GM10248 (cell line): ENCODE measurements at regions of chr16 and their contacts with region 1.

Region 1: GRCh38 chr16:106623-107324 is 28.7 kb downstream of the MPG start:
- DNase-seq: peak; percentile 83
- CTCF ChIP-seq: peak; percentile 81

Region 2: DNA sequence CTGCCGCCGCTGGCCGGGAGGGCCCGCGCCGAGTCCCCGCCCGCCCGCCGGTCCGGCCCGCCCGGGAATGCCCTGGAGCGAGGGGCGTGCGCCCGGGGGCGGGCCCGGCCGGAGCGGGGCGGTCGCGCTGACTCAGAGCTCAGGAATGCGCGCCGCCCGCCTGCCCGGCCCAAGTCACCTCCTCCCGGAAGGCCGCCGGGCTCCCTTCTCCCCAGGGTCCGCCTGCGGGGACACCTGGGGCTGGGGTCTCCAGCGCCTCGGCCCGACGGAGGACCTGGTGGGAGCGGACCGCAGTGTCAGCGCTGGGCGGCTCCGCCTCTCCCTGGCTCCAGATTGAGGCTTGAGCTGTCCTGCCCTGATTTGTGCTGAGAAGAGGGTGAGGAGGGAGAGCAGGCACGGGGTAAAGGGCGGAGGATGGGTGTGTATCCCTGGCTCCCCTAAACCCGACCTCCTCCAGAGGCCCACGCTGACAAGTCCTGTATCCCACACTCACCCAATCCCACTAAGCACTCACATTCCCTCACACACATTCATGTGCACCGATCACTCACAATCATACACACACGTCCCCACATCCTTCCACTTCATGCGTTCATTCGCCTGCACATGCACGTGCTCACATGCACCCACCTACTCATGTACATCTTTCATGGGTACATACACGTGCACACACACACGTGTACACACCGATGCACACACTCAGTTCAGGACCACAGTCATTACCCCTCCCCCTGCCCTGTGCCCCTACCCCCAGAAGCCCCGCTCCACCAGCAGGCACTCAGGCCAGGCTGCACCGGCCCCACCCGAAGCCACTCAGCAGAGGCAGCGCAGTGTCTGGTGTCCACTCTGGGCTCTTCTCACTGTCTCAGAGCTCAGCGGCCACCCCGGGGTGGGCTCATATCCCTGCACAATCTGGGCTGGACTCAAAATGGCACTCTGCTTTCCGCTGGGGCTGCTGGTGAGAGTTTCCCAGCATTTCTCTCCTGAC is 33.9 kb before region 1 on chr16 and contains the start of gene RHBDF1:
- CTCF ChIA-PET with region 1: interaction called, 13 read pairs
- POLR2A ChIA-PET with region 1: no interaction called
- DNase-seq: peak; percentile 59
- CTCF ChIP-seq: no peak

Region 3: DNA sequence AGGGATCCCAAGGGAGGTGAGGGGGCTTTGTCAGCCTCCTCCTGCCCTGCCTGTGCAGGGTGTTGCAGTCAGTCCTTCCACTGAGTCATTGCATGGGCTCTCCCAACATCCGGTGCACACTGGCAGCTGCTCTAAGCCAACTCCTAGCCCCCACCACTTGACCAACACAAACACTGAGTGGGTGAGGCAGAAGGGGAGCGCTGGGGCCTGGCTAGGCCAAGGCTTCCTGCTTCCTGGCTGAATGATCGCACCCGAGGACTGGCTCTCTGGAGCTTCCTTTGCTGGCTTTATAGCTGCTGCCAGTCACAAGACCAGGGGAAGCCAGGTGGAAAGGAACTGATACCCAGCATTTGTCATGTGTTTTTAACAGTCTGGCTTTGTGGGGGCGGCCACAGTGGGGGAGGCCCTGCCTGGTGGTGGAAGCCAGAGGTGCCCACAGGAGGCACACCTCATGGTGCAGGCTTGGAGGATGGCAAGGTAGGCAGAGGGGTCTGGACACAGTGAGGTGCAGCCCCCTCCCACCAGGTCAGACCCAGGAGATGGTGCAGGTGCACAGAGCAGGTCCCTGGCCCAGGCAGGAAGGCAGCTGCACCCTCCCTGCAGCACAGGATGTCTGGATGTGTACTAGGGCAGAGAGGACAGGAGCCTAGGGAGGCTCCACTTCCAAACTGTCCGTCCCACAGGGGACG is 21.9 kb before region 1 on chr16:
- CTCF ChIA-PET with region 1: interaction called, 10 read pairs
- POLR2A ChIA-PET with region 1: no interaction called
- DNase-seq: peak; percentile 79
- CTCF ChIP-seq: no peak

Region 4: GRCh38 chr16:117379-118365 is 10.9 kb after region 1 on chr16:
- CTCF ChIA-PET with region 1: interaction called, 54 read pairs
- POLR2A ChIA-PET with region 1: no interaction called
- DNase-seq: peak; percentile 67
- CTCF ChIP-seq: peak; percentile 58

Region 5: DNA sequence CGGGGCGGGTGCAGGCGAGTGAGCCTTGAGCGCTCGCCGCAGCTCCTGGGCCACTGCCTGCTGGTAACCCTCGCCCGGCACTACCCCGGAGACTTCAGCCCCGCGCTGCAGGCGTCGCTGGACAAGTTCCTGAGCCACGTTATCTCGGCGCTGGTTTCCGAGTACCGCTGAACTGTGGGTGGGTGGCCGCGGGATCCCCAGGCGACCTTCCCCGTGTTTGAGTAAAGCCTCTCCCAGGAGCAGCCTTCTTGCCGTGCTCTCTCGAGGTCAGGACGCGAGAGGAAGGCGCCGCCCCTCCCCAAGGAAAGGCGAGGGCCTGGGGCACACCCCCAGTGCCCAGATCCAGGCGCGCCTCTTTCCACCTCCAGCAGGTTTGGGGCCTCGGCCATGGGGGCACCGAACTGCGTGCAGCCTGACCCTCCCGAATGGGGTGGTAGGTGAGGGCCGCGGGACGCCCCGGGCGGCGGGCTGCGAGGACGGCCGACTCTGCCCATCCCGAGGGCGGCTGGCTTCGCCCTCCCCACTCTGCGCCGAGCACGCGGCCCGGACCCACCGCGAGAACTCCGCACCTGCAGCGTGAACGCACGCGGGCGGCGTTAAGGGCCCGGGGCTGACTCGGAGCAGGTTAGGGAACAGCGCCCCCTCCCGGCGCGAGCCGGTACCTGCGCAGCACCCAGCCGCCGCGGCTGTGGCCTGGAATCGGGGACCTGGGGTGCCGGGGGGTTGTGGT is 74.3 kb after region 1 on chr16:
- CTCF ChIA-PET with region 1: interaction called, 34 read pairs
- POLR2A ChIA-PET with region 1: no interaction called
- DNase-seq: peak; percentile 93
- CTCF ChIP-seq: peak; percentile 98

Region 6: GRCh38 chr16:351804-352520 is 245.2 kb after region 1 on chr16:
- CTCF ChIA-PET with region 1: interaction called, 10 read pairs
- POLR2A ChIA-PET with region 1: no interaction called
- DNase-seq: no peak
- CTCF ChIP-seq: no peak

Region 7: DNA sequence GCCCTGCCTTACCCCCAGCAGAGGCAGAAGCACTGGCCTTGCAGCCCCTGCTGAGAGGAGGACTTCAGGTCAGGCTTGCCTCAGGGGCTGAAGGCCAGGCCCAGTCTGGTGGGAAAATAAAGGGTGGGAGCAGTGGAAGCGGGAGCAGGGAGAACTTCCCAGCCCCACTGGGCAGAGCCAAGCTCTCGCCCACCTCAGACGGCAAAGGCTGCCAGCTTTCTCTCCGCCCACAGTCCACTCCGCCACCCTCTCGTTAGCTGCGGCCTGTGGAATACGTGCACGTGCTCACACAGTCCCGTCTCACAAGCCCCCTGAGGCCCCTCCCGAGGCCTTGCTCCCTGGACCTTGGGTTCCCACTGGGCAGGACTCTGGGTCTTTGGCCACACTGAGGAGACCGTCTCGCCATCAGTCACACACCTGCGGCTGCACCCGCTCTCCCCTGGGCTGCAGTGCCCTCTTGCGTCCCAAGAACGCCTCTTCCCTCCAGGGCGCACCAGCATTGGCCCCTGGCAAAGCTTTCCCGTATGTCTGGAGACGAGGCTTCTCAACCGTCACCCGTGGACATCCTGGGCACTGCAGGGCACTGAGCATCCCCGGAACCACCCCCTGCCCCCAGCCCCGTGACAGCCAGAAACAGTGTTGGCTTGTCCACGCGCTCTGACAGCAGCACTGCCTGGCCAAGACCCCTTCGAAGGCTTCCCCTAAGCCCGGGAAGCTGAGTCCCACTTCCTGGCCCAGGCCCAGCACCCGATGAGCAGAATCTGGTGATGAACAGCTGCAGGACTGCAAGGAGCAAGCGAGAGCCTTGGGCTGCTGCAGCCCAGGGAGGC is 255.3 kb after region 1 on chr16:
- CTCF ChIA-PET with region 1: interaction called, 43 read pairs
- POLR2A ChIA-PET with region 1: no interaction called
- DNase-seq: peak; percentile 89
- CTCF ChIP-seq: peak; percentile 83

Region 8: GRCh38 chr16:456891-457483 is 350.2 kb after region 1 on chr16:
- CTCF ChIA-PET with region 1: no interaction called
- POLR2A ChIA-PET with region 1: no interaction called
- DNase-seq: no peak
- CTCF ChIP-seq: no peak